ENCODE measurements at regions of chr16 and their contacts with region 1.

Region 1: GRCh38 chr16:15765880-15766279 is 90.9 kb downstream of the MYH11 start:
- DNase-seq: peak; percentile 49
- H3K4me3 Mint-ChIP-seq: no peak overlapping the region
- H3K27ac Mint-ChIP-seq: no peak overlapping the region
- H3K4me1 Mint-ChIP-seq: no peaks in the 10 kb centered on the region
- H3K27me3 Mint-ChIP-seq: peaks cover 34% of the 10 kb centered on the region
- CTCF ChIP-seq: peak; percentile 68

Region 2: DNA sequence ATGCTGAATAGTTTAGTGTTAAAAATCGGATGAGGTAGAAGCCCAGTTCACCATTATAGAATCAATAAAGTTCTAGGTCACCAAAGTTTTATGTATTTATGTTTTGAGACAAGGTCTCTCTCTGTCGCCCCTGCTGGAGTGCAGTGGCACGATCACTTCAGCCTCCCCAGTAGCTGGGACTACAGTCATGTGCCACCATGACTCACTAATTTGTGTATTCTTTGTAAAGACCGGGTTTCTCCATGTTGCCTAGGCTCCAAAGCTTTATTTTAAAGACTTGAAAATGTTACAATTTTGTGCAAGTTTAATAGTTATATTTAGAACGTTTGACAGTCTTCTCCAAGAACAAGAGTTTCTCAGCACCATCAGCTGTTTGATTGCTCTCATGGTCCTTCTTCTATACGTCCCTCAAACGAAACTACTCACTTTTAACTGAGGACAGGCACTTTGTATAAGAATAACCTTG is 83.7 kb before region 1 on chr16:
- CTCF ChIA-PET with region 1: no interaction called
- POLR2A ChIA-PET with region 1: no interaction called
- intact Hi-C with region 1: no loop called
- DNase-seq: peak; percentile 82
- H3K4me3 Mint-ChIP-seq: no peak overlapping the region
- H3K27ac Mint-ChIP-seq: no peak overlapping the region
- H3K4me1 Mint-ChIP-seq: no peaks in the 10 kb centered on the region
- H3K27me3 Mint-ChIP-seq: no peaks in the 10 kb centered on the region
- CTCF ChIP-seq: peak; percentile 44

Region 3: GRCh38 chr16:15777533-15778203 is 11.8 kb after region 1 on chr16:
- CTCF ChIA-PET with region 1: interaction called, 25 read pairs
- POLR2A ChIA-PET with region 1: no interaction called
- intact Hi-C with region 1: no loop called
- DNase-seq: peak; percentile 49
- H3K4me3 Mint-ChIP-seq: no peak overlapping the region
- H3K27ac Mint-ChIP-seq: no peak overlapping the region
- H3K4me1 Mint-ChIP-seq: no peaks in the 10 kb centered on the region
- H3K27me3 Mint-ChIP-seq: peaks cover 33% of the 10 kb centered on the region
- CTCF ChIP-seq: peak; percentile 38

Region 4: GRCh38 chr16:15928261-15929104 is 162.6 kb after region 1 on chr16:
- CTCF ChIA-PET with region 1: no interaction called
- POLR2A ChIA-PET with region 1: no interaction called
- intact Hi-C with region 1: no loop called
- DNase-seq: peak; percentile 38
- H3K4me3 Mint-ChIP-seq: no peak overlapping the region
- H3K27ac Mint-ChIP-seq: peak overlapping the region; percentile 27
- H3K4me1 Mint-ChIP-seq: peaks cover 6% of the 10 kb centered on the region
- H3K27me3 Mint-ChIP-seq: no peaks in the 10 kb centered on the region
- CTCF ChIP-seq: no peak

Region 5: GRCh38 chr16:16127469-16128116 is 361.7 kb after region 1 on chr16:
- CTCF ChIA-PET with region 1: interaction called, 13 read pairs
- POLR2A ChIA-PET with region 1: no interaction called
- intact Hi-C with region 1: loop called (anchors 2 kb)
- DNase-seq: peak; percentile 74
- H3K4me3 Mint-ChIP-seq: no peak overlapping the region
- H3K27ac Mint-ChIP-seq: no peak overlapping the region
- H3K4me1 Mint-ChIP-seq: no peaks in the 10 kb centered on the region
- H3K27me3 Mint-ChIP-seq: no peaks in the 10 kb centered on the region
- CTCF ChIP-seq: peak; percentile 78

Region 6: GRCh38 chr16:16137056-16137455 is 371.2 kb after region 1 on chr16:
- CTCF ChIA-PET with region 1: interaction called, 11 read pairs
- POLR2A ChIA-PET with region 1: no interaction called
- intact Hi-C with region 1: no loop called
- DNase-seq: no peak
- H3K4me3 Mint-ChIP-seq: no peak overlapping the region
- H3K27ac Mint-ChIP-seq: no peak overlapping the region
- H3K4me1 Mint-ChIP-seq: no peaks in the 10 kb centered on the region
- H3K27me3 Mint-ChIP-seq: no peaks in the 10 kb centered on the region
- CTCF ChIP-seq: no peak

Region 7: DNA sequence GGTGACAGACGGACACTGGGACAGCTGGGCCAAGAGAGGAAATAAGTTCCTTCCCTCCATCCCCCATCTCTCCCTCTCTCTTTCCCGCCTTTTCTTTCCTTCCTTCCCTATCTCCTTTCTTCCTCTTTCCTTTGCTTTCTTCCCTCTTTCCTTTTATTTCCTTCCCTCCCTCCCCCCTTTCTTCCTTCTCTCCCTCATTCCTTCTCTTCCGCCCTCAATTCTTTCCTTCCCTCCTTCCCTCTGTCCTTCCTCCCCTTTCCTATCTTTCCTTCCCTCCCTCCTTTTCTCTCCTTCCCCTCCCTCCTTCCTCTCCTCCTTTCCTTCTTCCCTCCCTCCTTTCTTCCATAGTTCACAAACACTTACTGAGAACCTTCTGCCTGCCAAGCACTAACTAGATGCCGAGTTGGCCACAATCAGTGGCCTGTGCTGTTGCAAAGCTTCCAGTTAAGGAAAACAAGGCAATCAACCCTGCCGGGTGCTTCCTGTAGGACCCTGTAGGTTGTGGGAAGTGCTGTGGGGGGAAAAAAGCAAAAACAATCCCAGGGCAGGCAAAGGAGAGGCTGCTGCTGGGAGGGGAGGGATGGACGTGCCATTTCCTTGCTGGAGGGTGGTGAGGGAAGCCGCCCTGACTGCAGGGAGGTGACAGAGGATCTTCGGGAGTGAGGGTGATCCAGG is 425.8 kb after region 1 on chr16:
- CTCF ChIA-PET with region 1: interaction called, 5 read pairs
- POLR2A ChIA-PET with region 1: no interaction called
- intact Hi-C with region 1: loop called (anchors 2 kb)
- DNase-seq: no peak
- H3K4me3 Mint-ChIP-seq: no peak overlapping the region
- H3K27ac Mint-ChIP-seq: no peak overlapping the region
- H3K4me1 Mint-ChIP-seq: no peaks in the 10 kb centered on the region
- H3K27me3 Mint-ChIP-seq: peaks cover 14% of the 10 kb centered on the region
- CTCF ChIP-seq: no peak

Measured in MCF 10A (cell line).